Esophagus squamous epithelium (tissue), 5 donors: ENCODE measurements at regions of chr3 and their contacts with region 1.

Region 1: GRCh38 chr3:38039101-38039898 is at the start of gene DLEC1:
- DNase-seq: peak; percentile 14
- H3K4me3 ChIP-seq: peak within 1 kb of the TSS; percentile 33 to 61 (median 47)
- H3K27ac ChIP-seq: peak within 1 kb of the TSS; percentile 6 to 31 (median 29)
- H3K4me1 ChIP-seq: peaks cover 9 to 20% (median 12%) of the 10 kb centered on the region in 3 donors
- H3K27me3 ChIP-seq: no peaks in the 10 kb centered on the region
- CTCF ChIP-seq: no peak
- POLR2A ChIP-seq: no peak
- total RNA-seq, gene DLEC1: 0.19 TPM in 1 of 4 donors, not detected in the others

Region 2: GRCh38 chr3:38117748-38118420 is 78.6 kb after region 1 on chr3:
- intact Hi-C with region 1: loop called (anchors 10 kb)
- DNase-seq: peak; percentile 7
- H3K4me3 ChIP-seq: no peak overlapping the region
- H3K27ac ChIP-seq: no peak overlapping the region
- H3K4me1 ChIP-seq: no peaks in the 10 kb centered on the region
- H3K27me3 ChIP-seq: no peaks in the 10 kb centered on the region
- CTCF ChIP-seq: peak; percentile 53 to 88 (median 73)
- POLR2A ChIP-seq: no peak

Region 3: DNA sequence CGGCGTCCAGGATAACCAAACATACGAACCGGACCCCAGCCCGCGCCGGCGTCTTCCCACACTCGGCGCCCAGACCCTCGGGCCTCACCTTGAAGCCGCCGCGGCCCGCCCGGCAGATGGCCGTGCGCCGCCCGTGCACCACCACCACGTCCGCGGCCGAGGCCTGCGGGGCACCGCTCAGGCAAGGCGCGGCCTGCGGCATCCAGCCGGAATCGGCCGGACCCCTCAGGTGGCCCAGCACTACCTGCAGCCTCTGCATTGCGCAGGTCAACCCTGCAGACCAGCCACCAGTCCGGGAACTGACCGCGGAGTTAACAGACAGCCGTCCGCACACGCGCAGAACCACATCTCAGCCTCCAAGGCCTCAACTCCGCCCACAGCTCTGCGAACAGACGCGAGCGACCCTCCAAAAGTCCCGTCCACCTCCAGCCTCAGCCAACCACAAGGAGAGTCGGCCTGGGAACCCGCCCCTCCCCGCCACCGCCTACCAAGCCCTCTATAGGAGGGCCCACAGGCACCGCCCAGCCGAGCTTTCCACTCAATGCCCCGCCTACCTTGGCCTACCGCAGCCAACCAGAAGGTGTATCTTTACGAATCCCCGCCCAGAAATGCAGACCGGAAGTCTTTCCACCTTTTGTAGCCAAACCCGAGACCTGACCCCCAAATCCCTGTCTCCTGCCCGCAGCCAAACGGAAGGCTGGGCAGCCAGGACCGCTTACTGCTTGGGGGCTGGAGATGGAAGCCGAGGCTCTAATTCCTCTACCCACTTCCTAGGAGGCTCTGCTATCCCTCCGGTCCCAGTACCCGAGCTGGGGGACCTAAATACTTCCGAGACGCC is 97.7 kb after region 1 on chr3 and contains the start of gene ACAA1:
- intact Hi-C with region 1: loop called (anchors 10 kb)
- DNase-seq: peak; percentile 98
- H3K4me3 ChIP-seq: peak within 1 kb of the TSS; percentile 64 to 99 (median 90)
- H3K27ac ChIP-seq: peak within 1 kb of the TSS; percentile 90 to 98 (median 94)
- H3K4me1 ChIP-seq: peaks cover 39 to 78% (median 49%) of the 10 kb centered on the region in 3 donors
- H3K27me3 ChIP-seq: no peaks in the 10 kb centered on the region
- CTCF ChIP-seq: peak in 1 of 6 experiments; percentile 16
- POLR2A ChIP-seq: peak in 3 of 4 donors; percentile 41 to 84 (median 66)
- total RNA-seq, gene ACAA1: 63.5 to 75.2 (median 68.7) TPM

Region 4: DNA sequence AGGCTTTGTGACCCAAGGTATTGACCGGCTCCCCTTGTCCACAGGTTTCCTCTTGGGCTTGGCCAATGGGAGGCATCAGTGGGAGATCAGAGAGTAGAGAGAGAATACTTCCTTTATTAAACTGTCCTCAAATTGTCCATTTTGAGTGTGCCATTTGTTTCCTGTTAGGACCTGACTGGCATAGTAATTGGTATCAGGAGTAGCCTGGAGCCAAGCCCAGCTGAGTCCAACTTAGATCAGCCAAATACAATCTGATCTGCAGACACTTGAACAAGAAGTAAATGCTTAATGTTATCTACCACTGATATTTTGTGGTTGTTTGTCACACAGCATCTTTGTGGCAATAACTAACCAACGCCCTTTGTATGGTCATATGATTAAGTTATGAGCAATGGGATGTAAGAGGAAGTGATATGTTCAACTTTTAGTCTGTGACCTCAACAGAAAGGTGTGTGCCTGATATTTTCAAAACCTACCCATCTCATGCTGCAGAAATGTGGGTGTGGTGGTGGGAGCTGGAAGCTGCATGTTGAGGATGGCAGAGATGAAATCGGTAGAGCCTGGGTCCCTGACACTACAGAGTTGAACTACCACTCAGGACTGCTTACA is 112.5 kb after region 1 on chr3:
- intact Hi-C with region 1: no loop called
- DNase-seq: no peak
- H3K4me3 ChIP-seq: no peak overlapping the region
- H3K27ac ChIP-seq: peak overlapping the region; percentile 53 to 89 (median 76)
- H3K4me1 ChIP-seq: peaks cover 4 to 61% (median 4%) of the 10 kb centered on the region in 3 donors
- H3K27me3 ChIP-seq: no peaks in the 10 kb centered on the region
- CTCF ChIP-seq: no peak
- POLR2A ChIP-seq: no peak